ENCODE measurements at regions of chr22 and their contacts with region 1.

Region 1: DNA sequence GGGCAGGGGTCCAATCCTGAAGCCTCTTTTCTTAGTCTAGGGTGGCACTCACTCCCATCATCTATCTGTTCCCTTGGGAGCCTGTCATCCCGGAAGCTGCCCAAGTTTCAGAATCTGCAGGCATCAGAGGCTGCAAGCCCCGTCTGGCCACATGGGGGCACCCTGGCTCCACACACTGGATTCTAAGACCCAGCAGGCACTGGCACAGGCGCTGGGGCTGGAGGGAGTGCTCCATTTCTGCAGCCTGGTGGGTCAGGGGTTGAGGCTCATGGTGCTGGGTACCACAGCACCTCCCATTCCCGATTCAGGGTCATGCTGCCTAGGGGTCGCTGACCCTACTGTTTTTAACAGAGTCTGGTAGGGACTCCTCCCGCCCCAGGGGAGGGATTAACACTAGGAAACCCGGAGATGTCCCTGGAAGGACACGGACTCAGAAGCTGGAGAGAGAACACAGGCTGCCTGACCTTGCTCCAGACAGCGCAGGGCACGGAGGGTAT is 243.9 kb upstream of the SYN3 start:
- DNase-seq: peak; percentile 87
- ATAC-seq: peak; percentile 81

Region 2: DNA sequence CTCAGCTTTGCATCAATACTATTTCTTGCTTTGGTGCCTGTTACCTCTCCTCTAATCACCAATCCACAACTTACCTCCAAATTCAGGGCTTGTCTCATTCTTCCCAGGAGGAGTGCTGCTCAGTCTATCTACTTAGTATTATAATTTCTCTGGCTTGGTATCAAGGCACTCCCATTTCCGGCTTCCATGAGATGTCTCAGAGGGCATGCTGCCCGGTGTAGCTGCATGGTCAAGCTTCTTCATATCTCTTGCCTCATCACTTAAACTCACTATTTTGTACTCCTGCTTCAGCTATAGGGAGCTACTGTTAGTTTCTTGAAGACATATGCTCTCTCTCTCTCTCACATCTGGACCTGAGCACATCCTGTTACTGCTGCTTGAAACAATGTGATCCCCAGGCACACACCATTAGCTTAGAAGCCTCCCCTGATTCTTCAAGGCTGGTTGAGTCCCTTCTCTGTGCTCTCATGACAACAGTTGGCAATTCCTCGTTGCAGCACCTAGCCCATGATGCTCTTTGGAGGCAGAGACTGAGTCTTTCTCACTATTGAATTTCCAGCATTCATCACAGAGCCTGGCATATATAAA is 61.1 kb before region 1 on chr22:
- intact Hi-C with region 1: no loop called
- DNase-seq: no peak
- ATAC-seq: no peak

Region 3: GRCh38 chr22:33519071-33519973 is 217.2 kb after region 1 on chr22:
- intact Hi-C with region 1: loop called (anchors 5 kb)
- DNase-seq: no peak
- ATAC-seq: peak; percentile 65

Region 4: DNA sequence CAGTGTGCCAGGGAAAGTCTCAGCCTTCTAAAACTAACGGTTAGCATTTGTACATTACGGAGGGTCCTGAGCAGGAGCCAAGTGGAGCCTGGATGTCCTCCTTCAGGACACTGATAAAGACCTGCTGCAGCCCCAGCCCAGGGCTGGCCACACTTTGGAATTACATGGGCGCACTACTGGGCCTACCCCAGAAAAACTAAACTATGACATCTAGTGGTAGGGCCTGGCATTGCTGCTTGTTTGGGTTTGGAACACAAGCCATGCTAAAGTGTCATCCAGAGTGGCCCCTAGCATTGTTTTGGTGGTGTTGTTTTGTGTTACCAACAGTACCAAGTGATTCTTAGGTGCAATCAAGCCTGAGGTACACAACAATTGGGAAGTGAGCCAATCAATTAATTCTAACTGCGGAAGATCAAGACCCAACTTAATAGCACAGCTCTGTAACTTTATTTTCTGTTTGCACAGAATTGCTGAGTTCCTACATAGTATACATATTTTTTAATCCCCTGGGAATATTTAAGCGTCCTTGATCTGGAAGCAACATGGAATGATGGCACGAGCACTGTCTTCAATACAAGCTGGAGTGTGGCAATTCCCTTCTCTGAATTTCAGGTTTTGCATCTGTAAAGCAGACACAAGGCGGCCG is 277.5 kb after region 1 on chr22:
- intact Hi-C with region 1: loop called (anchors 5 kb)
- DNase-seq: no peak
- ATAC-seq: peak; percentile 89

Region 5: GRCh38 chr22:33774781-33775180 is 472.7 kb after region 1 on chr22:
- intact Hi-C with region 1: loop called (anchors 10 kb)
- DNase-seq: no peak
- ATAC-seq: no peak

Region 6: DNA sequence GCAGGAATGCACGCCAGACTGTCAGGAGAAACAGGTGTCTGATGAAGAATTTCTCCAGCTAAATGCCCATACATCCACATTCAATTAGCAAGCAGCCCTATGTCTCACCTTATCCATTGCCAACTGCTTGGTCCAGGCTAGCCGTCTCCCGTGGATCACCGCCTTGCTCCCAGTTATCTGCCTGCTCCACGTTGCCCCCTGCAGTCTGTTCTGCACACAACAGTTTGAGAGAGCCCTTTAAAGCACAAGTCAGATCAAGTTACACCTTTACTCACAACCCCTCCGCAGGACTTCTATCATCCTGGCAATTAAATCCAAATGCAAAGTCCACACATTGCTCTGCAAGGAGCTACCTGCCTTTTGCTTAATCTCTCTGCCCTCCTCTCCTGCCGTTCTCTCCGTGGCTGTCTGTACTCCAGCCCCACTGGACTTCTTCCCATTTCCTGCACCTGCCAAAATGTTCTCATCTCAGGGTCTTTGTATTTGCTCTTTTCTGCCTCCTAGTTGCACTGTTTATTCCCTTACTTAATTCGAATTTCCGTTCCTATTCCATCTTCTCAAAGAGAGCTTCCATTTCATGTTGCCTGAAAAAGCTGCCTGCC is 803.5 kb after region 1 on chr22:
- intact Hi-C with region 1: loop called (anchors 5 kb)
- DNase-seq: no peak
- ATAC-seq: peak; percentile 79

Measured in Right ventricle myocardium inferior (tissue), 1 donor.